CD4-positive, alpha-beta T cell (primary cell): ENCODE measurements at regions of chr1 and their contacts with region 1.

Region 1: DNA sequence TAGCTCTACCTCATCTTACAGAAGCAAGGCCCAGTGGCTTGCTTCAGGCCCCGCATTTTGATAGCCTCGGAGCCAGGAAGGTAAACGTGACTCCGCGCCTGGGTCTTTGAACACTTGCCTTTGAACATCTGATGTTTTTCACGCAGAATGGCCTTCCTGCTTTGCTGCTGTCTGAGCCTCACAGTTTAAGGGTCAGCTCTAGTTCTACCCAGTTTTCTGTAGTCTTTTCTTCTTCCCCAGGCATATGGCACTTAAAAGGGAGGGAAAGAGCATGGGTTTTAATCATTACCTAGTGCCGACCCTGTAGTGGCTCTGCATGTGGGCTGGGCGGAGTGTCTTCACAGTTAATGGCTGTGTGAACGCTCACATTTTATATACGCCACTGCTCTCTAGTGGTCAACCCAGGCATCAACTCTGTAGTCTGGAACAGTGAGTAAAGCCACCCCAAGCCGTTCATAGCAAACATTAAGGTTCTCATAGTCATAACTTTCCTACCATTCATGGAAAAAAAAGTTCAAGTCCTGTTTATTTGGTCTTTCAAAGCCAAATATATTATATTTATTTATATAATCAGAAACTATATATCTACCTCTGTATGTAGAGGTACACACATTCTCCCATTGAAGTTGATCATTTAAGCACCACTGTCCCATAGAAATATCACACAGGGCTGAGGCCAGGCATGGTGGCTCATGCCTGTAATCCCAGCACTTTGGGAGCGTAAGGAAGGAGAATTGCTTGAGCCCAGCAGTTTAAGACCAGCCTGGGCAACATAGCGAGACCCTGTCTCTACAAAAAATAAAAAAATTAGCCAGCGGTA is 78.1 kb downstream of the IER5 start:
- DNase-seq: peak; percentile 53 to 88 (median 65)
- ATAC-seq: peak; percentile 100
- H3K4me3 ChIP-seq: no peak overlapping the region
- H3K4me3 Mint-ChIP-seq: peak overlapping the region; percentile 75
- H3K27ac ChIP-seq: no peak overlapping the region
- H3K27ac Mint-ChIP-seq: peak overlapping the region; percentile 7
- H3K4me1 ChIP-seq: peaks cover 8% of the 10 kb centered on the region
- H3K4me1 Mint-ChIP-seq: peaks cover 7% of the 10 kb centered on the region
- H3K27me3 ChIP-seq: no peaks in the 10 kb centered on the region
- H3K27me3 Mint-ChIP-seq: no peaks in the 10 kb centered on the region
- CTCF ChIP-seq: peak; percentile 94

Region 2: DNA sequence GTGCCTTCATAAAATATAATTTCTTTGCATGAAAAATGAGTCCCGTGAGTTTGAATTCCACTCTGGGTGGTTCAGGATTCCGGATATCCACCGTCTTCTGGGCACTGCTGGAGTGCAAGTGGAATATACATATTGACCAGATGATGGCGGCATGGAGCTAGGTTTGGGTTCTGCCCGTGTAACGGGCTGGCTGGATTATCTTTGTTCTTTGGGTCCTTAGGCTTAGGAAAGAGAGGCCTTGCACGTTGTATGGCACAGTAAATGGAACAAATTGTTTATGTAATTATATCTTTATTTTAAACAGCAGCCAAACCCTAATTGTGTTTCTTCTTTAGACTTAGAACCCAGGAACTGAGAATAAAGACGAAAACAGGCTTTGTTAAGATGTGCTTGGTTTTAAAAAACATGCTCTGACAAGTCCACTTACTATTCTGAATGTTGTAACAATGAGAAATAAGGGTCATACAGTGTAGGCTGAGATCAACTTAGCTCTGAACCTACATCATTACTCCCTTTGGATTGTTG is 650.7 kb before region 1 on chr1:
- CTCF ChIA-PET with region 1: no interaction called
- POLR2A ChIA-PET with region 1: no interaction called
- intact Hi-C with region 1: loop called (anchors 2 to 5 kb)
- DNase-seq: peak; percentile 20 to 81 (median 36)
- ATAC-seq: peak; percentile 96
- H3K4me3 ChIP-seq: no peak overlapping the region
- H3K4me3 Mint-ChIP-seq: no peak overlapping the region
- H3K27ac ChIP-seq: no peak overlapping the region
- H3K27ac Mint-ChIP-seq: no peak overlapping the region
- H3K4me1 ChIP-seq: peaks cover 3% of the 10 kb centered on the region
- H3K4me1 Mint-ChIP-seq: no peaks in the 10 kb centered on the region
- H3K27me3 ChIP-seq: peaks cover 7 to 8% of the 10 kb centered on the region in 2 experiments
- H3K27me3 Mint-ChIP-seq: no peaks in the 10 kb centered on the region
- CTCF ChIP-seq: peak; percentile 88

Region 3: DNA sequence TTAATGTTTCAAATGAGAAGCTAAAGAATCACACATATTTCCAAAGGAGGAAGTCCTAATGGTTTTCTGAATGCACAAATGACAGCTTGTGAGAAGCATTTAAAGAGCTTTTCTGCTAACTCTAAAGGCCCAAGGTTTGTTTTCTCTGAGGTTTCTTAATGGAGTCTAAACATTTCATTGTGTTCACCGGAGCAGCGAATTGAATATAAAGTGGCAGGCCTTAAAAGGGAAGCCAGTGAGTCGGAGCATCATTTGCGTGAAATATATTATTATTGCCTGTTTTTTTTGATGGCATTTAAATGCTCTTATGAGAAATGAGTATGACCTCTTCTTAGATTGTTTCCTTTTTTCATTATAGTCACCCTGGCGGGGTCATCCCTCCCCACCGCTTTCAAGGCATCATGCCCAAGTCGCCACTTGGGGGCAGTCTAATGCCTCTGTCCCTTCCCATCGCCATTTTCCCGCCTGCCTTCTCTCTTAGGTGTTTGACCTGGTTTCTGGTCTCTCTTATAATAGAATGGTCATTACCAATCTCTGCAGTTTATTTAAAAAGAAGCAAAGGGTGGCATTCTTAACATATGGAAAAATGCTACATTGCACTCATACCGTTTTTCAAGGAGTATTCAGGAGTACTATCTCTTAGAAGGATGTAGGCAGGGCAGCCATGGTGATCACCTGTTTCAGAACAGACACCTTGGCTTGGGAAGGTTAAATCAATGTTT is 633.2 kb before region 1 on chr1:
- CTCF ChIA-PET with region 1: no interaction called
- POLR2A ChIA-PET with region 1: no interaction called
- intact Hi-C with region 1: loop called in 1 of 2 experiments (anchors 5 kb)
- DNase-seq: peak; percentile 33 to 74 (median 44)
- ATAC-seq: peak; percentile 62
- H3K4me3 ChIP-seq: no peak overlapping the region
- H3K4me3 Mint-ChIP-seq: no peak overlapping the region
- H3K27ac ChIP-seq: no peak overlapping the region
- H3K27ac Mint-ChIP-seq: no peak overlapping the region
- H3K4me1 ChIP-seq: no peaks in the 10 kb centered on the region
- H3K4me1 Mint-ChIP-seq: no peaks in the 10 kb centered on the region
- H3K27me3 ChIP-seq: no peaks in the 10 kb centered on the region
- H3K27me3 Mint-ChIP-seq: no peaks in the 10 kb centered on the region
- CTCF ChIP-seq: peak; percentile 62

Region 4: DNA sequence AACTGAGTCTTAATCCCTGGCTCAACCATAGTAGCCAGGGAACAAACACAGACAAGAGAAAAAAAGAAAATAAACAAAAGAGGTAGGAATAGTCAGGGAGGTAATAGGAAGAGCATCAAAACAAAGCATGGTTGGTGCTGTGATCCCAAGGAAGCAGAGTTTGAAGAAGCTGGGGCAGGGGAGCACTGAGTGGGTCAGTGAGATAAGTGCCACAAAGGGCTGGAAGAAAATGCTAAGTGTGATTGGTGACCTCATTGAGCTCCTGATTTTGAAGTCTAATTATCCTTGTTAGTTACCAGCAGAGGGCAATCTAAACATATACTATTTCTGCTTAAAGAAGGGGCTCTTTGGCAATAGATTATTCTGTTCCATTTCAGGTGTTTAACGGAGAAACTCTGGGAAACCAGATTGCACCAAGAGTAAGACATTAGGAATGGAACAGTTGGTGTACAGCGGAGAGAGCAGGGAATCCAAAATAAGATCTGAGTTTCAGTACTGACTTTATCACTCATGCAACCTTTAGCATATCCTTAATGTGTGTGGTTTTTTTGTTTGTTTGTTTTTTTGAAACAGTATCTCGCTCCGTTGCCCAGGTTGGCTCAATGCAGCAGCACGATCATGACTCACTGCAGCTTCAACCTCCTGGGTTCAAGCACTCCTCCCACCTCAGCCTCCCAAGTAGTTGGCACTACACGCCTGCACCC is 284.6 kb before region 1 on chr1:
- CTCF ChIA-PET with region 1: no interaction called
- POLR2A ChIA-PET with region 1: interaction called, 3 read pairs
- intact Hi-C with region 1: loop called (anchors 1 to 5 kb)
- DNase-seq: peak in 2 of 14 experiments; percentile 8 to 22
- ATAC-seq: no peak
- H3K4me3 ChIP-seq: no peak overlapping the region
- H3K4me3 Mint-ChIP-seq: no peak overlapping the region
- H3K27ac ChIP-seq: no peak overlapping the region
- H3K27ac Mint-ChIP-seq: no peak overlapping the region
- H3K4me1 ChIP-seq: no peaks in the 10 kb centered on the region
- H3K4me1 Mint-ChIP-seq: no peaks in the 10 kb centered on the region
- H3K27me3 ChIP-seq: no peaks in the 10 kb centered on the region
- H3K27me3 Mint-ChIP-seq: no peaks in the 10 kb centered on the region
- CTCF ChIP-seq: no peak

Region 5: DNA sequence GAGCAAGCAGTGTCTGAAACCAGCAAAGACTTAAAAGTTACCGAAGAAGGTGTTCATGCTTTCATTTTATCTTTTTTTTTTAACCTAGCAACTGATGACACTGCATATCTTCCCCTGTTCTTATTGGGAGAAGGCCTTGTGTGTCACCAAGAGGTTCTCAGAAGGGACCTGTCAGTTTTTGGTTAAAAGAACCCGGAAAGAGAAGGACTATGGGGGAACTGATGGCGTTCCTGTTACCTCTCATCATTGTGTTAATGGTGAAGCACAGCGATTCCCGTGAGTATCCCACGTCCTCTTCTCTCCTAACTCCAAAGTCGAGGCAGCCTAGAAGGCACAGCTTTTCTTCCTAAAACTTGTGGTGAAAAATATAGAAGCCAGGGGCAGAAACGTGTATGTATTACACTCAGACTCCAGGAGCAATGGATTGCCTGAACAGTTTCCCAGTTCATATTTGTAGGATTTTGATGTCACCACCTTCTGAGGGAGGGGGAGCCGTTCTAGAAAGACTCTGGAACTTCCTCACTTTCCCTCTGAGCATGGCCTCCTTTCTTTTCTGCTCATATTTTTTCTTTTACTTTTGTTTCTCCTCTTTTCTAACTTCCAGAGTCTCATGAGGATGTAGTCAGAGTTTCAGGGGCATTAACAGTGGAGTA is 132.7 kb before region 1 on chr1 and contains the start of gene MR1:
- CTCF ChIA-PET with region 1: interaction called, 13 read pairs
- POLR2A ChIA-PET with region 1: interaction called, 3 read pairs
- intact Hi-C with region 1: loop called (anchors 1 to 2 kb)
- DNase-seq: peak in 8 of 14 experiments; percentile 19 to 92 (median 42)
- ATAC-seq: peak; percentile 97
- H3K4me3 ChIP-seq: peak within 1 kb of the TSS; percentile 78
- H3K4me3 Mint-ChIP-seq: peak within 1 kb of the TSS; percentile 97
- H3K27ac ChIP-seq: peak within 1 kb of the TSS; percentile 87 to 97
- H3K27ac Mint-ChIP-seq: peak within 1 kb of the TSS; percentile 92
- H3K4me1 ChIP-seq: peaks cover 47% of the 10 kb centered on the region
- H3K4me1 Mint-ChIP-seq: peaks cover 64% of the 10 kb centered on the region
- H3K27me3 ChIP-seq: no peaks in the 10 kb centered on the region
- H3K27me3 Mint-ChIP-seq: no peaks in the 10 kb centered on the region
- CTCF ChIP-seq: no peak
- total RNA-seq, gene MR1: 16.2 to 18.1 TPM

Region 6: GRCh38 chr1:181142096-181142958 is 24.3 kb before region 1 on chr1:
- CTCF ChIA-PET with region 1: interaction called, 18 read pairs
- POLR2A ChIA-PET with region 1: no interaction called
- intact Hi-C with region 1: loop called (anchors 1 kb)
- DNase-seq: peak; percentile 74 to 92 (median 86)
- ATAC-seq: peak; percentile 100
- H3K4me3 ChIP-seq: no peak overlapping the region
- H3K4me3 Mint-ChIP-seq: no peak overlapping the region
- H3K27ac ChIP-seq: no peak overlapping the region
- H3K27ac Mint-ChIP-seq: no peak overlapping the region
- H3K4me1 ChIP-seq: peaks cover 31% of the 10 kb centered on the region
- H3K4me1 Mint-ChIP-seq: peaks cover 36% of the 10 kb centered on the region
- H3K27me3 ChIP-seq: no peaks in the 10 kb centered on the region
- H3K27me3 Mint-ChIP-seq: no peaks in the 10 kb centered on the region
- CTCF ChIP-seq: peak; percentile 97

Region 7: DNA sequence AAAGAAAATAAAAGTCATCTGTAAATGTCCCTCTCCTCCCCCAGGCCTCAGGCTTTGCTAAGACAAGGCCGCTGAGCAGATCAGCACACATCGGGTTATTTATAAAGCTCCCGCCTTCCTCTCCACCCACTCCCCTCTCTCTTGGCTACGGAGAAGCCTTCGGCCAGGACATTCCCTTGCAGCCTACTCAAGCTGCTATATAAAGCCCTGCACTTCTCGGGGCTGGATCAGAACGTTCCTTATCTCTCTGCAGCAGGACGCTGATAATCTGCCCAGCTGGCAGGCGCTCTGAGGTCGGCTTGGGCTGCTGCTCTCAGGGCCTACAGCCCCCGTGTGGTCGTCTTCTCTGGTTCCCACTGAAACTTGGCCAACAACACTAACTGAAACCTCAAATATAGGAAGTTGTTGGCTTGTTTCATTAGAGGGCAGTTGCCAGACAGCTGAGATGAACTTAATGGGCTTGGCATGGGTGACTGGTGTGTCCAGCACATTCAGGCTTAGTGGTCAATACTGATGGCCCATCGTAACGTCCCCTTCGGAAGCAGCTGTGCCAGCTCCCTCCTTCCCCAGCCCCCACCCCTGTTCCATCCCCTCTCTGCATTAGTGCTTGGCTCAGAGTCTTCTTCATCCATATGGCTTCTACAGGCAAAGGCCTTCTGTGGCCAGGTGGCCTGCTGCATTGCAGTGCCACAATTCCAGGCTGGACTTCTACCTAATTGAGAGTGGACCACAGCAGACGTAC is 13.5 kb before region 1 on chr1:
- CTCF ChIA-PET with region 1: interaction called, 17 read pairs
- POLR2A ChIA-PET with region 1: interaction called, 86 read pairs
- intact Hi-C with region 1: loop called in 1 of 2 experiments (anchors 2 kb)
- DNase-seq: peak in 2 of 14 experiments; percentile 35 to 44
- ATAC-seq: no peak
- H3K4me3 ChIP-seq: no peak overlapping the region
- H3K4me3 Mint-ChIP-seq: no peak overlapping the region
- H3K27ac ChIP-seq: no peak overlapping the region
- H3K27ac Mint-ChIP-seq: no peak overlapping the region
- H3K4me1 ChIP-seq: peaks cover 54% of the 10 kb centered on the region
- H3K4me1 Mint-ChIP-seq: peaks cover 63% of the 10 kb centered on the region
- H3K27me3 ChIP-seq: no peaks in the 10 kb centered on the region
- H3K27me3 Mint-ChIP-seq: no peaks in the 10 kb centered on the region
- CTCF ChIP-seq: no peak